ENCODE measurements at regions of chr3 and their contacts with region 1.

Region 1: DNA sequence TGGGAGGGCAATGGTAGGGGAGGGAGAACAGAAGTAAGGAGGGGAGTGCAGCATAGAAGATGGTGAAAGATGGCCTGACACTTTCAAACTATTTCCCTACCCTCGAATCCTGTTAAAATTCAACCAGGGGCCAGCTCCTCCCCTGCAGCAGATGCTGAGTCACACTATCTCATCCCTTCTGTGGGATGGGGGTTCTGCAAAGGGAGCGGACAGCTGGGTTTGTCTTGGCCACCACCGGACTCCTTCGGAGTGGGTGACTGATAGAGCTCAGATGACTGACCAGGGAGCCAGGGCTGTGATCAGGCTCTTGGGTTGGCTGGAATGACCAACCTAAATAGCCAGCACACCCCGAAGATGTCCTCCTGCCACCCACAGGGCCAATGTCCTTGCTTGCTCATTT is 33.6 kb upstream of the TMCC1 start:
- DNase-seq: no peak
- ATAC-seq: peak in 1 of 4 donors; percentile 6
- H3K4me3 ChIP-seq: no peak overlapping the region
- H3K27ac ChIP-seq: no peak overlapping the region
- H3K4me1 ChIP-seq: no peaks in the 10 kb centered on the region
- H3K27me3 ChIP-seq: no peaks in the 10 kb centered on the region
- CTCF ChIP-seq: no peak
- POLR2A ChIP-seq: no peak

Region 2: DNA sequence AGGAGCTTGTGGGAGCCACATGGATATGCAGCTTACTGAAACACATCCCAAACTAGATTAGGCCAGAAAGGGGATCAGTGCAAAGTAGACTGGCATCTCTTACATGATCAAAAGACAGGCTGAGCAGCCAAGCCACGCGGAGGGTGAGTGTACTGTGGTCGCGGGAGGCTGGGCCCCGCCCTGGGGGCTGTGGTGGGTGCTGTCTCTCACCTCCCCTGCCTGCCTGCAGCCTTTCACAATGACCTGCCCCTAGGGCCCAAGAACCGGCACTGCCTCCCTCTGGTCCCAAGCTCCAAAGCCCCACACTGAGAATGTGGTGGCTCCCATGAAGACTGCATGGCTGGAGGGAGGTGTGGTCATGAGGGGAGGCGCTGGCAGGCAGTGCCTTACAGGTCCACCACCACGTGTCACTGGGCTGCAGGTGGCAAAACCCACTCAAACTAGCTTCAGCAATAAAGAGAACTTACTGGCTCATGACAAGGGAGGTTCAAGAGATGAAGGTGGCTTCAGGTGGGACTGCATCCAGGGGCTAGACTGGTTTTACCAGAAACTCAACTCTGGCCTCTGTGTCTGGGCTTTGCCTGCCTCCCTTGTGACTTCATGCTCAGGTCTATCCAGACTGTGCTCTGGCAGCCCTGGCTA is 293.2 kb before region 1 on chr3:
- intact Hi-C with region 1: loop called in 1 of 2 experiments (anchors 10 kb)
- DNase-seq: no peak
- ATAC-seq: no peak
- H3K4me3 ChIP-seq: no peak overlapping the region
- H3K27ac ChIP-seq: no peak overlapping the region
- H3K4me1 ChIP-seq: no peaks in the 10 kb centered on the region
- H3K27me3 ChIP-seq: no peaks in the 10 kb centered on the region
- CTCF ChIP-seq: no peak
- POLR2A ChIP-seq: no peak

Region 3: DNA sequence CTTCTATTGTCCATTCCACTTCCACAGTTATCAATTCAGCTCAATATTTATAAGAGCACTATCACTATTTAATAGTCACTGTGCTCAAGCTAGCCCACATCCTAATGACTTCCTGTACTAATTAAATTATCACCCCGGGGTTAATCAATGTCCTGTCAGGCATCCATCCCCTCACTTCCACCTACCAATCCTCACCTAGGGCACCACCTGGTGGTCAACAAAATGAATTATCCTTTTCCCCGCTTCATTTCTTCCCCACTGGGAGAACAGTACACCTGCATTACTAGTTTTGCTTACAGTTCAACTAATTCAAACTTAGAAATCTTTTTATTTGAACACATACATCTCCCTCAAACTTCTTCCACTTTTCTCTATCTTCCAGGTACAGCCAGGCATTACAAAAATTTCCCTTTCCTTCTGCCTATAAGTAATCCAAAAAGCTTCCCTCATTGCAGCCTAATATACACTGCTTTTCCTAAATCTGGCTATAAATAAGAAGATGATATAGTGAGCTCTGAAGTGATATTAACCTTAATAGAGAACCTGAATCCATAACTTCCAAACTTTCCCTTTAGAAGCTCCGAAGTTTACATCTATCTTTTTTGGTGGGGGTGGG is 102.0 kb before region 1 on chr3:
- intact Hi-C with region 1: no loop called
- DNase-seq: peak in 1 of 3 donors; percentile 53
- ATAC-seq: peak; percentile 71 to 81 (median 78)
- H3K4me3 ChIP-seq: no peak overlapping the region
- H3K27ac ChIP-seq: no peak overlapping the region
- H3K4me1 ChIP-seq: peaks cover 0 to 13% (median 6%) of the 10 kb centered on the region in 4 donors
- H3K27me3 ChIP-seq: no peaks in the 10 kb centered on the region
- CTCF ChIP-seq: peak; percentile 74 to 80 (median 76)
- POLR2A ChIP-seq: no peak

Region 4: GRCh38 chr3:130044370-130044769 is 117.3 kb after region 1 on chr3:
- intact Hi-C with region 1: no loop called
- DNase-seq: no peak
- ATAC-seq: no peak
- H3K4me3 ChIP-seq: no peak overlapping the region
- H3K27ac ChIP-seq: no peak overlapping the region
- H3K4me1 ChIP-seq: no peaks in the 10 kb centered on the region
- H3K27me3 ChIP-seq: no peaks in the 10 kb centered on the region
- CTCF ChIP-seq: no peak
- POLR2A ChIP-seq: no peak

Measured in right lobe of liver (tissue), 6 donors.